ENCODE measurements at regions of chr6 and their contacts with region 1.

Region 1: GRCh38 chr6:118776607-118777549 is 117.1 kb upstream of the ASF1A start:
- DNase-seq: peak; percentile 47
- ATAC-seq: peak; percentile 74 to 79

Region 2: GRCh38 chr6:118580585-118581419 is 196.1 kb before region 1 on chr6:
- intact Hi-C with region 1: loop called in 1 of 2 experiments (anchors 10 kb)
- DNase-seq: peak; percentile 30
- ATAC-seq: peak; percentile 88 to 93

Region 3: DNA sequence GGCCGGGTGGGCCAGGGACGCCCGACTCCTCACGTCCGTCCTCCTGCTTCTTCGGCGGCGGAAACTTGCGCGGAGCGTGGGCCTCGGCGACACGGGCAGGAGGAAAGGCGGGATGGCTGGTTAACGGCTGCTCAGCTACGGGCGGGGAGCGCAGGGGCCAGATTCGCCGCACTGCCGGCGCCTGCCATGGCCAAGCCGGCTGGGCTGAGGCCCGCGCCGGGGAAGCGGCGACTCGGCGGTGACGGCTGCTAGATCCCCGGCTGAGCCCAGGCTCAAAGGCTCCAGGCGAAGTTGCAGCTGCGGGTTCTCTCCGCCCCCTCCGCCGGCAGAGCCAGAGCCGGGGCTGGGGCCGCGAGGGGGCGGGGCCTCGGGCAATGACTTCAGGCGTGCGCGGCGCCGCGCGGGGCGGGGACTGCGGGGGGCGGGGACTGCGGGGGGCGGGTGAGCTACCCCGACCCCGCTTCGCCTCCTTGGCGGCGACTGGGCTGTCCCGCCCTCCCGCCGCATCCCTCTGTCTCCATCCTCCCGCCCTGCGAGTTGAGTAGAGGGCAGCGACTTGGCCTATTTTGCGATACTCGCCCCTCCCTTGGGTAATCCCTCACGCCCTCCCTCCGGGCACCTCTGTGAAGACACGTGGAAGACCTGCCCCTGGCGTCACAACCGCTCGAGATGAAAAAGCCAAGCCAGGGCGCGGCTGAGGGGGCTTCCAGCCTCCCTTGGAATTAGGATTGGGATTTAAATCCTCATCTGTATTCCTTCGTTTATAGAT is 125.4 kb before region 1 on chr6 and contains the start of gene CEP85L:
- intact Hi-C with region 1: loop called in 1 of 2 experiments (anchors 5 kb)
- DNase-seq: peak; percentile 95
- ATAC-seq: peak; percentile 98 to 99
- total RNA-seq, gene CEP85L: 8.5 TPM

Measured in left cardiac atrium (tissue), 4 donors.